Ovary (tissue), 10 donors: ENCODE measurements at regions of chr19 and their contacts with region 1.

Region 1: GRCh38 chr19:29212648-29213573 is at the start of gene UQCRFS1:
- DNase-seq: peak; percentile 92 to 96 (median 94)
- H3K4me3 ChIP-seq: peak within 1 kb of the TSS; percentile 97
- H3K27ac ChIP-seq: peak within 1 kb of the TSS; percentile 68 to 87
- H3K4me1 ChIP-seq: peaks cover 5% of the 10 kb centered on the region
- H3K27me3 ChIP-seq: no peaks in the 10 kb centered on the region
- CTCF ChIP-seq: peak in 1 of 3 donors; percentile 9
- EP300 ChIP-seq: no peak
- POLR2A ChIP-seq: peak; percentile 84
- total RNA-seq, gene UQCRFS1: 20.1 to 29.3 (median 23.8) TPM

Region 2: GRCh38 chr19:29798774-29799497 is 586.0 kb after region 1 on chr19:
- intact Hi-C with region 1: loop called in 1 of 4 experiments (anchors 10 kb)
- DNase-seq: no peak
- H3K4me3 ChIP-seq: no peak overlapping the region
- H3K27ac ChIP-seq: no peak overlapping the region
- H3K4me1 ChIP-seq: no peaks in the 10 kb centered on the region
- H3K27me3 ChIP-seq: no peaks in the 10 kb centered on the region
- CTCF ChIP-seq: no peak
- EP300 ChIP-seq: no peak
- POLR2A ChIP-seq: no peak